BJ (cell line): ENCODE measurements at regions of chr5 and their contacts with region 1.

Region 1: DNA sequence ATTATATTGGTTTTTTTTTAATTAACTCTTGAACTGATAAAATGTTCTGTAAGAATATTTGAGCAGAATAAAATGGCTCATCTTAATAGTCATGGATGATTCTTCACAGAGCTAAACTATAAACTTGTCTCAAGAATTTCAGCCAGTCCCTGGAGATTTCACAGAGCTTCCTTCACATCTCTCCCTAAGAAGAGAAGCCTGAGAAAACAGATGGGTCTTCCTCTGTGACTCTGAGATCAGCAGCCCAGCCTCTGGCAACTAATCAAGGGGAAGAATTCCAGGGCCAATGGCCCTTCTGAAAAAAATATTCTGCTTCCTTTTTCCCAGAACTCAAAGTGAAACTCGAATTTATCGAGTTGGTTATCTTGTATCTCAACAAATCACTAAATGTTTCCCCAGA is 122.2 kb upstream of the ITGA1 start:
- DNase-seq: no peak
- H3K4me3 ChIP-seq: no peak overlapping the region
- H3K27me3 ChIP-seq: no peaks in the 10 kb centered on the region; the same call in 1 of the 2 replicates
- CTCF ChIP-seq: no peak

Region 2: DNA sequence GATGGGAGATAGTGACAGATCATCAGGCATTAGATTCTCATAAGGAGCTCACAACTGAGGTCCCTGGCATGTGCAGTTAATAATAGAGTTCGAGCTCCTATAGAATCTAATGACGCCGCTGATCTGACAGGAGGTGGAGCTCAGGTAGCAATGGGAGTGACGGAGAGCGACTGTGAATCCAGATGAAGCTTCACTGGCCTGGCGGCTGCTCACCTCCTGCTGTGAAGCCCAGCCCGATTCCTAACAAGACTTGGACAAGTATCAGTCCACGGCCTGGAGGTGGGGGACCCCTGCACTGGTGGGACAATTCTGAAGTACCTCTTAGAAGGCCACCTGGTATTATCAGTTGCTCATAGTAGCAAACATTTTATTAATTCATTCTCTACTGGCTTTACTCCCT is 255.7 kb before region 1 on chr5:
- CTCF ChIA-PET with region 1: no interaction called
- POLR2A ChIA-PET with region 1: no interaction called
- DNase-seq: no peak
- H3K4me3 ChIP-seq: no peak overlapping the region
- H3K27me3 ChIP-seq: no peaks in the 10 kb centered on the region
- CTCF ChIP-seq: no peak

Region 3: GRCh38 chr5:52620315-52620714 is 45.2 kb before region 1 on chr5:
- CTCF ChIA-PET with region 1: no interaction called
- POLR2A ChIA-PET with region 1: no interaction called
- DNase-seq: no peak
- H3K4me3 ChIP-seq: no peak overlapping the region
- H3K27me3 ChIP-seq: no peaks in the 10 kb centered on the region; the same call in 1 of the 2 replicates
- CTCF ChIP-seq: no peak

Region 4: GRCh38 chr5:52709171-52709925 is 43.8 kb after region 1 on chr5:
- CTCF ChIA-PET with region 1: no interaction called
- POLR2A ChIA-PET with region 1: no interaction called
- DNase-seq: no peak
- H3K4me3 ChIP-seq: no peak overlapping the region
- H3K27me3 ChIP-seq: no peaks in the 10 kb centered on the region
- CTCF ChIP-seq: no peak

Region 5: GRCh38 chr5:52875827-52876226 is 210.3 kb after region 1 on chr5:
- CTCF ChIA-PET with region 1: interaction called, 3 read pairs
- POLR2A ChIA-PET with region 1: interaction called, 20 read pairs
- DNase-seq: no peak
- H3K4me3 ChIP-seq: no peak overlapping the region
- H3K27me3 ChIP-seq: no peaks in the 10 kb centered on the region
- CTCF ChIP-seq: no peak

Region 6: DNA sequence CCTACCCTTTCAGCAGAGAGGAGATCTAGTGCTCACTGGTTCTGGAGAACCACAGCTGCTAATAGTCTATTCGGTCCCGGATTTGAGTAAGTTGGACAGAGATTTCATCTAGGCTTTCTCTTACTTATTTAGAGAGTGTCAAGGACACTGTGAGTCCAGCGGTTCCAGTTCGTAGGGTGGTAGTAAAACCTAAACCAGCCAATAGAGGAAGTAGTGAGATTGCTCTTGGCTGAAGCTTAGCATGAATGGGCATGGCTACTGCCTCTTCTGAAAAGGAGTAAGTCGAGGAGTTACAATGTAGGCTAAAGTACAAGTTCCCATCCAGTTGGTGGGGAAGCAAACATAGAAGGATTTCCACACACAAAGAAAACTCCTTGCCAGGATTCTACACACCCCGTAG is 553.6 kb after region 1 on chr5:
- CTCF ChIA-PET with region 1: no interaction called
- POLR2A ChIA-PET with region 1: no interaction called
- DNase-seq: no peak
- H3K4me3 ChIP-seq: no peak overlapping the region
- H3K27me3 ChIP-seq: no peaks in the 10 kb centered on the region
- CTCF ChIP-seq: no peak